CD8-positive, alpha-beta T cell (primary cell): ENCODE measurements at regions of chr9 and their contacts with region 1.

Region 1: DNA sequence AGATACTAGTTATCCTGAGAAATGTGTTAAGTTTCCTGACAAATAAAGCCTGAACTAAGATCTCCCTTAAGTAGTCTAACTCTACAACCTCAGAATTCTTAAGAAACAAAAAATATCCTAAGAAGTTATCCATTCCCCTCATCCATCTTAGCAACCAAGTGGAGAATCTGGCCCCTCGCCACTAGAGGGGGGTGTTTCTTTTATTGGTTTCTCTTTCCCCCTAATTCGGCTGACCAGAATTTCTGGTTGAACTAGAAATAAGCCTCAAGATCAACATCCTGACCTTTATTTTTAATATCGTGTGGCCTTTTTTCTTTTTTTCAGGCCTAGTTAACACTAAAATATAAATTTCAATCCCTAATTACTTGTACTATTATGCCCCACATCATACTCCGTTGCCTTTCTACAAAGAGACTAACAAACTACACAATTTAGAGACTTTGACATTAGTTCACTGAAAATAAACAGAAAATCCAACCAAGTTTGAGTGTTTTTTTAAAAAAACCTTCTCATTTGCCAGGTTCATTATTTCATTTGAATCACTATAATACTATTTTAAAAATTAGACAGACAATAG is 14.3 kb upstream of the NR4A3 start:
- DNase-seq: peak in 8 of 9 experiments; percentile 51 to 85 (median 74)
- ATAC-seq: peak; percentile 84
- H3K4me3 ChIP-seq: no peak overlapping the region
- H3K4me3 Mint-ChIP-seq: no peak overlapping the region
- H3K27ac ChIP-seq: no peak overlapping the region
- H3K27ac Mint-ChIP-seq: no peak overlapping the region
- H3K4me1 ChIP-seq: no peaks in the 10 kb centered on the region
- H3K4me1 Mint-ChIP-seq: peaks cover 13% of the 10 kb centered on the region
- H3K27me3 ChIP-seq: no peaks in the 10 kb centered on the region
- H3K27me3 Mint-ChIP-seq: peaks cover 4% of the 10 kb centered on the region
- CTCF ChIP-seq: peak; percentile 90

Region 2: DNA sequence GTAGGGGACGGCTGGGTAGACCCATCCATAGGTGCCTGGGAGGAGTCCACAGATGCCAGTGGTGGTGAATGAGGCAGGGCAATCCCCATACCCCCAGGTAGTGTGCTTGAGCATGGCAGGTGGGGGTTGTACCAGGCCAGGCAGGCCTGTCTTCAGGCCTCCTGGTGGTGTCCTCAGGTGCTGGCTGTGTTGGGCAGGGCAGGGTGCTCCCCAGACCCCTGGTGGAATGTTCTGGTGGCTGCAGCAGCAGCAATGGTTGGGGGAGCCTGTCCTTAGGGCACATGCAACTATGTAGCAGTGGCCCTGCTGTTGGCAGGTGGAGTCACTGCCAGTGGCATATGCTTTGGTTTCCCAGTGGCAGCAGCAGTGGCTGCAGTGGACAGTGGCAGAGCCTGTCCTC is 595.6 kb before region 1 on chr9:
- CTCF ChIA-PET with region 1: no interaction called
- POLR2A ChIA-PET with region 1: no interaction called
- intact Hi-C with region 1: loop called in 1 of 2 experiments (anchors 2 kb)
- DNase-seq: no peak
- ATAC-seq: no peak
- H3K4me3 ChIP-seq: no peak overlapping the region
- H3K4me3 Mint-ChIP-seq: no peak overlapping the region
- H3K27ac ChIP-seq: no peak overlapping the region
- H3K27ac Mint-ChIP-seq: no peak overlapping the region
- H3K4me1 ChIP-seq: no peaks in the 10 kb centered on the region
- H3K4me1 Mint-ChIP-seq: peaks cover 5% of the 10 kb centered on the region
- H3K27me3 ChIP-seq: no peaks in the 10 kb centered on the region
- H3K27me3 Mint-ChIP-seq: no peaks in the 10 kb centered on the region
- CTCF ChIP-seq: no peak

Region 3: DNA sequence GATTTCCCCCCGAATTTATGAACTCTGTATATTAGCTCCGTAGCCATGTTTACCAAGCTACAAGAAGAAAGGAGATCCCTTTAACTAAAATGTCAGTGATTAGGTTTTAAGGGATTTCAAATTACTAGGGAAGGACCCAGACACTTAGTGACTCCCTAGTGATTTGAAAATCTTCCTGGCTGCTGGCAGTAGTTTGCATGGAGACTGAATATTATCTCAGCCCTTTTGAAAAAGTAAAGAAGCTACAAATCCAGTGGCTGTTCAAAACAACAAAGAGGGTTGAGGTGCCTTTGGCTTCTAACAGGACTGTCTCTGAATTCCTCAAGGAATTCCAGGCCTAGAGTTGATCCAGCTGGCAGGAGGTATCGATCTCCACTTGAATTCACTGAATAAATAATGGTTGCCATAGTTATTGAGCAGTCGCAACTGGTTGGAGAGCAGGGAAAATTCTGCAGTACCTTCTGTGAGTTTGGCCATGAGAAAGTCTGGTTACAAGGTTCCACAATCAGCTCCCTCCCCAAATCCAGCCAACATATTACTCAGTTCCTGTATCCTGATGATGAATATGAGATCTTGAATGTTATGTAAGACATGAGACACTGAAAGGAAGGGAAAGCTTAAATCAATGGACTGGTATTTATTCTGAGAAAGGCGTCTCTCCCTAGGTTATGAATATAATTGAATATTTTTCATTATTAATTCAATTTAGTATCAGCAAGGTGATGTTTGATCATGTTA is 52.0 kb after region 1 on chr9:
- CTCF ChIA-PET with region 1: no interaction called
- POLR2A ChIA-PET with region 1: no interaction called
- intact Hi-C with region 1: loop called in 1 of 2 experiments (anchors 5 kb)
- DNase-seq: no peak
- ATAC-seq: no peak
- H3K4me3 ChIP-seq: no peak overlapping the region
- H3K4me3 Mint-ChIP-seq: no peak overlapping the region
- H3K27ac ChIP-seq: no peak overlapping the region
- H3K27ac Mint-ChIP-seq: no peak overlapping the region
- H3K4me1 ChIP-seq: no peaks in the 10 kb centered on the region
- H3K4me1 Mint-ChIP-seq: no peaks in the 10 kb centered on the region
- H3K27me3 ChIP-seq: no peaks in the 10 kb centered on the region
- H3K27me3 Mint-ChIP-seq: no peaks in the 10 kb centered on the region
- CTCF ChIP-seq: no peak

Region 4: GRCh38 chr9:100011062-100011681 is 203.8 kb after region 1 on chr9:
- CTCF ChIA-PET with region 1: interaction called, 7 read pairs
- POLR2A ChIA-PET with region 1: no interaction called
- intact Hi-C with region 1: loop called (anchors 1 kb)
- DNase-seq: peak in 7 of 9 experiments; percentile 6 to 77 (median 41)
- ATAC-seq: peak; percentile 54
- H3K4me3 ChIP-seq: no peak overlapping the region
- H3K4me3 Mint-ChIP-seq: no peak overlapping the region
- H3K27ac ChIP-seq: no peak overlapping the region
- H3K27ac Mint-ChIP-seq: no peak overlapping the region
- H3K4me1 ChIP-seq: no peaks in the 10 kb centered on the region
- H3K4me1 Mint-ChIP-seq: no peaks in the 10 kb centered on the region
- H3K27me3 ChIP-seq: no peaks in the 10 kb centered on the region
- H3K27me3 Mint-ChIP-seq: no peaks in the 10 kb centered on the region
- CTCF ChIP-seq: peak; percentile 82

Region 5: DNA sequence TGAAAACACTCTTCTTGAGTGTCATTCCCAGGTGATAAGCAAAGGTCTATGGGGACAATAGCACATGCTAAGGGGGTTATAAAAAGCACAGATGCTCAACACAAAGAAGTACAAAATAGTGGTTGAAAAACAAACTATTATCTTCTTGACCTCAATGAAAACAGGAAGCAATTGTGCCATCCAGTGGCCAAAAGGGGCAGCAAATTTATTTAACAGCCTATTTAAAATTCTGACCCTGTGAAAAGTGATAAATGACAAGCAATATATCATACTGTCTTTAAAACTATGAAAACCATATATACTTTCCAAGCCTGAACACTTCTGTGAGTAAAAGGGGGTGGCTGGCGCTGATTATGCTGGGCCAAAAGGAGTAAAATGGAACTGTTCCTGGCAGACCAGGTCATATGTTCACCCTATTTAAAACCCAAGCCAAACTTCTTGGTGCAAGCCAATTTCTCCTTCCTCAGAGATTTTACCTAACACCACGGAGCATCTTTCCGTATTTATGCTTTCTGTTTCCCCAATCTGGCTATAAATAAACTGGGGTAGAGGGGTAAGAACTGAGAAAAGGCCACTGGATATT is 515.7 kb after region 1 on chr9:
- CTCF ChIA-PET with region 1: no interaction called
- POLR2A ChIA-PET with region 1: no interaction called
- intact Hi-C with region 1: loop called (anchors 2 to 5 kb)
- DNase-seq: peak in 4 of 9 experiments; percentile 11 to 48 (median 30)
- ATAC-seq: no peak
- H3K4me3 ChIP-seq: no peak overlapping the region
- H3K4me3 Mint-ChIP-seq: no peak overlapping the region
- H3K27ac ChIP-seq: no peak overlapping the region
- H3K27ac Mint-ChIP-seq: no peak overlapping the region
- H3K4me1 ChIP-seq: no peaks in the 10 kb centered on the region
- H3K4me1 Mint-ChIP-seq: peaks cover 14% of the 10 kb centered on the region
- H3K27me3 ChIP-seq: no peaks in the 10 kb centered on the region
- H3K27me3 Mint-ChIP-seq: no peaks in the 10 kb centered on the region
- CTCF ChIP-seq: peak; percentile 39